Activated CD8-positive, alpha-beta T cell treated with anti-CD3 and anti-CD28 coated beads for 36 hours (primary cell): ENCODE measurements at regions of chr2 and their contacts with region 1.

Region 1: GRCh38 chr2:113192438-113193100 is 18.8 kb downstream of the PSD4 start:
- DNase-seq: no peak
- ATAC-seq: no peak
- H3K4me3 Mint-ChIP-seq: no peak overlapping the region
- H3K27ac Mint-ChIP-seq: no peak overlapping the region
- H3K4me1 Mint-ChIP-seq: peaks cover 28% of the 10 kb centered on the region
- H3K27me3 Mint-ChIP-seq: no peaks in the 10 kb centered on the region
- CTCF ChIP-seq: no peak

Region 2: DNA sequence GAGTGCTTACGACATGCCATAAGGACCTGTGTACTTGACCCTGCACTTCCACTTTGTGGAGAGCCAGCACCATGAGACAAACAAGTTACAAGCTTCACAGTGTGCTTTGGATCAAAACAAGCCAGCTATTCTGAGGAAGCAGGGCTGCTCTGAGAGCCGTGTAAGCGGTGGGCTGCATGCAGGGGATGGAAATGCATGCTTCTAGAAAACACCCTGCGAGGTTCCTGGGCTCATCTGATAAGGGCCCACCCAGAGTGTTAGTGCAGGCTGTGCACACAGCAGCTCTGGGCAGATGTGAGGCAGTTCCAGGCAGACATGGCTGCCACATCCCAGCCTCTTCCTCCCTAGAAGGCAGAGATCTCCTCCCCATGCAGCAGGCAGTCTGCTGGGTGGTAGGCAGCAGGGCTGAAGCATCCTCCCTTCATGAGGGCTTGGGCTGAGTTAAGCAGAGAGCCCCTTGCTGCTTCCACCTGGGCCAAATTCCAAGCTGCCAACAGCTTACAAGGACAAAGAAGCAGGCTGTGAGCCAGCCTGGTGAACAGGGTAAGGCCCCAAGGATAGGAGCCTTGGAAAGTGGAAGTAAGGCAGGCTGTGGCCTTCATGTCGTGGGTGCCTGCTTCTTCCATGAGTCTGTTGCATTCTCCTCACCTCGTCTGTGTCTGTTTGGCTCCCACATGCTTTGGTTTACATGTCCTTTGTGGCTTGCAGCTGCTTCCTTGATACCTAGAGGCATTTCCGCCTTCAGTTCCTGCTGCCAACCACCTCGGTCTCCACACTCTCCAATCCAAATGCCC is 11.1 kb before region 1 on chr2:
- CTCF ChIA-PET with region 1: interaction called, 44 read pairs
- POLR2A ChIA-PET with region 1: interaction called, 22 read pairs
- intact Hi-C with region 1: no loop called
- DNase-seq: no peak
- ATAC-seq: peak; percentile 10
- H3K4me3 Mint-ChIP-seq: peak overlapping the region; percentile 84
- H3K27ac Mint-ChIP-seq: peak overlapping the region; percentile 79
- H3K4me1 Mint-ChIP-seq: peaks cover 90% of the 10 kb centered on the region
- H3K27me3 Mint-ChIP-seq: no peaks in the 10 kb centered on the region
- CTCF ChIP-seq: no peak